Posterior vena cava (tissue), 2 donors: ENCODE measurements at regions of chr10 and their contacts with region 1.

Region 1: GRCh38 chr10:8116926-8117493 is 62.5 kb downstream of the GATA3 start:
- DNase-seq: no peak

Region 2: DNA sequence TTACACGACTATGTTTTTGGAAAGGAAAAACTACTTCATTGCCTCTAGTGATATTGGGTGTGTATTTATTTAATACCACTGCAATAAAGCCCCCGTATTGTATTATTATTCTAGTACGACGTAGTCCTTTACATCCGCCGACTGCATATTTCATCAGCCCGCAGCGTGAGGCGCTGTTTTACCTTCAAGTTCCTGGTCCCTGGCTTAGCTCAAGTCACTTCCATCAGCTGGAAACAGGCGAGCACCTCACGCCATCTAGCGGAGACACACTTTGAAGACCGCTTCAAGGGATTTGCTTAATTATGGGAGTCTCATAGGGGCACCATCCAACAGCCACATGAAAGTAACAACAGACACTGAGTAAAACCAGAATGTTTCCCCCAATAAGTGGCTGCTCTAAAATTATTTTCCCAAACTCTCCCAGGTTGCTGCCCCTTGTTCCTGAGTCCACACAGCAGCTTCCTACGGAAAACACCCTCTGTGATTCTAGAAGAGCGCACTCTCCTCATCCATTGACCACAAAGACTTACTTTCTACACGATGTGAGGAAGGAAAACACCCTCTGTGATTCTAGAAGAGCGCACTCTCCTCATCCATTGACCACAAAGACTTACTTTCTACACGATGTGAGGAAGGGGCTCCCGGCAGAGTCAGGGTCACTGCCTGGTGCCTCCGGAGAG is 429.6 kb before region 1 on chr10:
- intact Hi-C with region 1: no loop called
- DNase-seq: peak; percentile 92

Region 3: DNA sequence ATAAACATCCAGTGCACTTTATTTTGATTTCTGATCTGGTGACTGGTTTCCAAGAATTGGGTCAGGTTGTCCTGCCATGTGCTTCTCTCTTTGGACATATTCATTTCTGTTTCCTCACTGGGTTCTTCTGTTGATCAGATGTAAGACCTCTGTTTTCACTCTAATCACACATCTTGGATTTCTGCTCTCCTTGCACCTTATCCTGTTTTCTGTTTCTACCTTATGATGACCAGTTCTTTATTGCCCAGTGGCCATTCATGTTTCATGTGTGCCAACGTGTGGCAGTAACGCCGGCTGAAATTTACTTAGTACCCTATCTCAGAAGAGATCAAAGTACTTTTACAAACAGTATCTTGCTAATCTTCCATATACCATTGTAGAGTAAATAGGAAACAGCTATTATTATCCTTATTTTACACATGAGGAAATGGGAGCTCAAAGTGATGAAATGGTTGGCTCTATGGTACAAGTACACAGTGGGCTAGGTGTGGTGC is 11.4 kb after region 1 on chr10:
- intact Hi-C with region 1: no loop called
- DNase-seq: no peak

Region 4: GRCh38 chr10:8138471-8138870 is 21.5 kb after region 1 on chr10:
- intact Hi-C with region 1: loop called in 1 of 2 experiments (anchors 1 kb)
- DNase-seq: no peak